Body of pancreas (tissue), 4 donors: ENCODE measurements at regions of chr1 and their contacts with region 1.

Region 1: GRCh38 chr1:182604169-182605164 is at the start of gene RGS16:
- DNase-seq: peak; percentile 94 to 96 (median 94)
- ATAC-seq: peak; percentile 99
- H3K4me3 ChIP-seq: peak within 1 kb of the TSS; percentile 23 to 51
- H3K27ac ChIP-seq: peak within 1 kb of the TSS; percentile 23 to 46 (median 32)
- H3K4me1 ChIP-seq: peaks cover 37% of the 10 kb centered on the region
- H3K27me3 ChIP-seq: no peaks in the 10 kb centered on the region
- CTCF ChIP-seq: no peak
- POLR2A ChIP-seq: peak; percentile 83 to 94 (median 93)
- total RNA-seq, gene RGS16: 2.6 to 3.9 TPM

Region 2: GRCh38 chr1:182781841-182782586 is 177.5 kb after region 1 on chr1:
- intact Hi-C with region 1: loop called (anchors 5 kb)
- DNase-seq: peak; percentile 65 to 77 (median 73)
- ATAC-seq: peak; percentile 82
- H3K4me3 ChIP-seq: no peak overlapping the region
- H3K27ac ChIP-seq: no peak overlapping the region
- H3K4me1 ChIP-seq: no peaks in the 10 kb centered on the region
- H3K27me3 ChIP-seq: no peaks in the 10 kb centered on the region
- CTCF ChIP-seq: peak; percentile 32 to 74 (median 66)
- POLR2A ChIP-seq: no peak